ENCODE measurements at regions of chr12 and their contacts with region 1.

Region 1: GRCh38 chr12:76542908-76543307 is 16.7 kb downstream of the OSBPL8 start:
- DNase-seq: no peak
- H3K4me3 ChIP-seq: no peak overlapping the region
- H3K27me3 ChIP-seq: no peaks in the 10 kb centered on the region
- CTCF ChIP-seq: no peak

Region 2: DNA sequence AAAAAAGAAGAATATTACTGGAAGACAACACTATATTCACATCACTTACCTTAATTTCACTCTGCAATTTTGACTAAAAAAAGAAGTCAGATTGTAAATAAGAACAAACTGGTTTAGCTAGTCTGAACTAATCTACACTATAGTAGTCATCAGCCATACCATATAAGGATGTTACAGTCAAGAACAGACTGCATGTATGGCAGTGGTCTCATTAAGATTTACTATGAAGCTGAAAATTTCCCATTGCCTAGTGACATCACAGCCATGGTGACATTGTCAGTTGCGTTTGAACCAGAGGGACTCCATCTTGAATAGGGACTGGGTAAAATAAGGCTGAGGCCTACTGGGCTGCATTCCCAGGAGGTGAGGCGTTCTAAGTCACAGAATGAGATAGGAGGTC is 34.7 kb before region 1 on chr12:
- CTCF ChIA-PET with region 1: no interaction called
- POLR2A ChIA-PET with region 1: no interaction called
- DNase-seq: no peak
- H3K4me3 ChIP-seq: no peak overlapping the region
- H3K27me3 ChIP-seq: no peaks in the 10 kb centered on the region
- CTCF ChIP-seq: no peak

Region 3: GRCh38 chr12:77560714-77561113 is 1017.8 kb after region 1 on chr12:
- CTCF ChIA-PET with region 1: no interaction called
- POLR2A ChIA-PET with region 1: interaction called, 10 read pairs
- DNase-seq: no peak
- H3K4me3 ChIP-seq: no peak overlapping the region
- H3K27me3 ChIP-seq: no peaks in the 10 kb centered on the region
- CTCF ChIP-seq: no peak

Measured in BJ (cell line).